ENCODE measurements at regions of chr12 and their contacts with region 1.

Region 1: GRCh38 chr12:27424631-27425230 is 21.8 kb upstream of the SMCO2 start:
- DNase-seq: no peak
- H3K4me3 ChIP-seq: no peak overlapping the region
- H3K27ac ChIP-seq: no peak overlapping the region
- H3K4me1 ChIP-seq: peaks cover 0 to 2% (median 0%) of the 10 kb centered on the region in 4 donors
- H3K27me3 ChIP-seq: no peaks in the 10 kb centered on the region
- CTCF ChIP-seq: peak; percentile 48 to 68

Region 2: GRCh38 chr12:26599096-26599695 is 825.5 kb before region 1 on chr12:
- intact Hi-C with region 1: no loop called
- DNase-seq: no peak
- H3K4me3 ChIP-seq: no peak overlapping the region
- H3K27ac ChIP-seq: no peak overlapping the region
- H3K4me1 ChIP-seq: no peaks in the 10 kb centered on the region
- H3K27me3 ChIP-seq: no peaks in the 10 kb centered on the region
- CTCF ChIP-seq: no peak

Region 3: DNA sequence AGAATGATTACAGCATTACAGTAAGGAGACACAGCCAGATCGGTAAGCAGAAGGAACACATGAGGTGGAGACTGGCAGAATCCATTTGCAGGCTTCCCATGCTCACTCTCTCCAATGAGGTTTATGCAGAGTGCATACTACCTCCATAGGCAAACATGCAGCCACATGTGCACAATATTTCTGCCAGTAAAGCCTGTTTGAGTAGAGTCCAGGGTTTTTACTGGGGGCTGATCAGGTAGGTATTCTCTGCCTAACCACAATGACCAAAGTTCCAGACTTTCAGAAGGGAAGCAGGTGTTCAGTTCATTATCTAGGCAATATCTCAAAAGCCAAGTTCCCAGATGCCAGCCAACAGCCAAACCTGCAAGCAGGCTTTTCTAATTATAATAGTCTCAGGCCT is 518.0 kb before region 1 on chr12:
- intact Hi-C with region 1: no loop called
- DNase-seq: no peak
- H3K4me3 ChIP-seq: no peak overlapping the region
- H3K27ac ChIP-seq: no peak overlapping the region
- H3K4me1 ChIP-seq: no peaks in the 10 kb centered on the region
- H3K27me3 ChIP-seq: no peaks in the 10 kb centered on the region
- CTCF ChIP-seq: no peak

Region 4: DNA sequence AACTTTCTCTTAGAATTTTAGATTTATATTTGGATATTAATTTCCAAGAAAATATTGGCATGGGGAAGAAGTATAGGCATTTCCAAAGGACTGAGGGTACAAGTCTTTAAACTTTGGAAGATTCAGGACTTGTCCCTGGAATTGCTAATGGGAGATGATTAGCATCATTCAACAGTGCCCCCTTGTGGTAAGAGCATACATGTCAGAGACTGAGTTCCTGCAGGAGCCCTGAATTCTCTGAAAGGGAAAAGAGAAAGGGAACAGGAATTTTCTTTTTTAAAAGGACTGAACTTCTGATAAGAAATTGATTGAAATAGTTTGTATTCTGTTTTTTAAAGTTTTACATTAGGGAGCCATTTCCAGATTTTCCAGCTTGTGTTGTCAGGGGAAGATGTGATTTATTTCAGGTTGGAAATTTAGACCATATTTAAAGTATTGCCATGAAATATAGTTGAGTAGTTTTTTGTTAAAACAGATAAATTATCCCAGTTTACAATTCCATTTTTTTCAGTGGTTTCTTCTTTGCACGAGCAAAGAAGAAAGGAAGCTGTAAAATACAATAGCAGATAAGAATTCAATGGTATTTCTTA is 227.5 kb after region 1 on chr12:
- intact Hi-C with region 1: loop called (anchors 5 kb)
- DNase-seq: peak in 1 of 2 donors; percentile 46
- H3K4me3 ChIP-seq: no peak overlapping the region
- H3K27ac ChIP-seq: no peak overlapping the region
- H3K4me1 ChIP-seq: no peaks in the 10 kb centered on the region
- H3K27me3 ChIP-seq: no peaks in the 10 kb centered on the region
- CTCF ChIP-seq: peak; percentile 83 to 85

Measured in tibial artery (tissue), 4 donors.